ENCODE measurements at regions of chr7 and their contacts with region 1.

Region 1: GRCh38 chr7:87059525-87060287 is at the start of gene ELAPOR2:
- DNase-seq: peak; percentile 78
- ATAC-seq: peak; percentile 97 to 99
- total RNA-seq, gene ELAPOR2: 8.0 to 9.5 TPM

Region 2: DNA sequence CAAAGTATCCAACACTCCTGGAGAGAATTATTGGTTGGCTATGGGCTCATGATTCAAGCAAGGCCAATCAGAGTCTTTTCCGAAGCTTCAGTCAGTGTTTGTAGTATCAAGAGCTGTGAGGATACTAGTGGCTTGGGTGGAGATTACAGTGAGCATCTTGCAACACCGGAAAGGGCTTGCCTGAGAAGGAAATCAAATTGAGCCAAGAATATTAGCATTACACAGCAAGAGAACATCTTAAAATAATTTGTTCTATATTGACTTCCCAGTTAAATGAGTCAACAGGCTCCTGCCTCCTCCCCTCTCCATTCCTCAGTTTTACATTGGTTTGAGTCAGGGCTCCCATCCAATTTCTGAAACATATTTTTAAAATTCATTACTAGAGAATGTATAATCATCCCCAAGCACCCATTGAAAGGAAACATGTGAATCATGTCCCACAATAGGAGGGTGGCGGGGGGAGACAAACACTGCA is 127.6 kb before region 1 on chr7:
- intact Hi-C with region 1: loop called in 1 of 2 experiments (anchors 5 kb)
- DNase-seq: peak; percentile 33
- ATAC-seq: peak; percentile 74 to 97

Region 3: GRCh38 chr7:87206361-87206760 is 146.7 kb after region 1 on chr7:
- intact Hi-C with region 1: no loop called
- DNase-seq: no peak
- ATAC-seq: no peak

Measured in left cardiac atrium (tissue), 4 donors.